Caco-2 (cell line): ENCODE measurements at regions of chr11 and their contacts with region 1.

Region 1: GRCh38 chr11:114439229-114440120 is at the start of gene REXO2:
- DNase-seq: peak; percentile 98
- H3K4me3 ChIP-seq: peak within 1 kb of the TSS; percentile 78
- H3K4me3 Mint-ChIP-seq: peak within 1 kb of the TSS; percentile 91
- H3K27ac Mint-ChIP-seq: peak within 1 kb of the TSS; percentile 96
- H3K4me1 ChIP-seq: peaks cover 42% of the 10 kb centered on the region
- H3K4me1 Mint-ChIP-seq: peaks cover 61% of the 10 kb centered on the region
- H3K27me3 ChIP-seq: no peaks in the 10 kb centered on the region
- H3K27me3 Mint-ChIP-seq: no peaks in the 10 kb centered on the region
- CTCF ChIP-seq: peak; percentile 16 to 53
- total RNA-seq, gene REXO2: 221 and 241 TPM in 2 replicates

Region 2: GRCh38 chr11:114075891-114076441 is 363.5 kb before region 1 on chr11:
- CTCF ChIA-PET with region 1: no interaction called
- POLR2A ChIA-PET with region 1: no interaction called
- intact Hi-C with region 1: no loop called
- DNase-seq: peak in 1 of 2 experiments; percentile 66
- H3K4me3 ChIP-seq: no peak overlapping the region
- H3K4me3 Mint-ChIP-seq: no peak overlapping the region
- H3K27ac Mint-ChIP-seq: no peak overlapping the region
- H3K4me1 ChIP-seq: peaks cover 50% of the 10 kb centered on the region
- H3K4me1 Mint-ChIP-seq: peaks cover 50% of the 10 kb centered on the region
- H3K27me3 ChIP-seq: no peaks in the 10 kb centered on the region
- H3K27me3 Mint-ChIP-seq: no peaks in the 10 kb centered on the region
- CTCF ChIP-seq: peak; percentile 75 to 91

Region 3: DNA sequence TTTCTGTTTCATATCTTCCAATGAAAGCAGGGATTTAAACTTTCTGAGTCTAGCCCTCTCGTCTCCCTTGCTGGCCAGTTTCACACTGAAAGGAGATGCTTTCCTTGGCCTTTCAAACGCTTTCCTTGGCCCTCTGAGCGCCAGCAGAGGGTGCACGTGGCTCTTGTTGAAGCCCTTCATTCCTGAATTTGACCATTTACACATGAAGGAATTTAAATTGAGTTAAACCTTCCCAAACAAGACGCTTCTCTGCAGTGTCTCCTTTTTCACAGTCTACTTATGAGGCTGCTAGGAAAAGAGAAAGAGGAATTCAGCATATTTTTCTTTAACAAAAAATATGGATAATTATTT is 121.7 kb before region 1 on chr11:
- CTCF ChIA-PET with region 1: no interaction called
- POLR2A ChIA-PET with region 1: no interaction called
- intact Hi-C with region 1: loop called (anchors 2 kb)
- DNase-seq: peak; percentile 52 to 57
- H3K4me3 ChIP-seq: no peak overlapping the region
- H3K4me3 Mint-ChIP-seq: no peak overlapping the region
- H3K27ac Mint-ChIP-seq: no peak overlapping the region
- H3K4me1 ChIP-seq: peaks cover 20% of the 10 kb centered on the region
- H3K4me1 Mint-ChIP-seq: peaks cover 14% of the 10 kb centered on the region
- H3K27me3 ChIP-seq: no peaks in the 10 kb centered on the region
- H3K27me3 Mint-ChIP-seq: peaks cover 3% of the 10 kb centered on the region
- CTCF ChIP-seq: peak; percentile 32 to 48

Region 4: GRCh38 chr11:114400217-114400914 is 39.1 kb before region 1 on chr11 and contains the starts of genes C11orf71 and RBM7:
- CTCF ChIA-PET with region 1: no interaction called
- POLR2A ChIA-PET with region 1: interaction called, 10 read pairs
- intact Hi-C with region 1: loop called (anchors 1 kb)
- DNase-seq: peak; percentile 100
- H3K4me3 ChIP-seq: peak within 1 kb of the TSS; percentile 51
- H3K4me3 Mint-ChIP-seq: peak within 1 kb of the TSS; percentile 91
- H3K27ac Mint-ChIP-seq: peak within 1 kb of the TSS; percentile 99
- H3K4me1 ChIP-seq: peaks cover 16% of the 10 kb centered on the region
- H3K4me1 Mint-ChIP-seq: peaks cover 36% of the 10 kb centered on the region
- H3K27me3 ChIP-seq: no peaks in the 10 kb centered on the region
- H3K27me3 Mint-ChIP-seq: no peaks in the 10 kb centered on the region
- CTCF ChIP-seq: peak in 1 of 2 experiments; percentile 33
- total RNA-seq, gene C11orf71: 9.5 and 9.8 TPM in 2 replicates
- total RNA-seq, gene RBM7: 57.6 and 62.6 TPM in 2 replicates

Region 5: DNA sequence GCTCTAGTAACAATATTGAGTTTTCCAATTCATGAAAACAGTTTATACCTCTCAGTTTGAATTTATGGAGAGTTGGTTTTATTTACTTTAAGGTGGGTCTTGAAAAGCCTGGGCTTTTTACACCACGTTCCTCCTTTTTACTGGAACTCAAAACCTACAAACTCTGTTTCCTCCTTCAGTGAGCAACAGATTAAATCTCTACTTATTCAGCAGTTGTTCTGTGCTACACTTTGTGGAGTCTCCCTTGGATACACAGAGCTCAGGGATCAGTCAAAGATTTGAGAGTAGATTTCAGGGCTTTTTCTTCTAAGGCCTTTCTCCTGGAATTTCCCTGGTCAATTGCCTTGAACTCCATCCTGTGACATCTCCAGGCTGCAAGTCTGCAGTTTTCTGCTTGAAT is 116.7 kb after region 1 on chr11:
- CTCF ChIA-PET with region 1: no interaction called
- POLR2A ChIA-PET with region 1: no interaction called
- intact Hi-C with region 1: loop called (anchors 5 kb)
- DNase-seq: peak in 1 of 2 experiments; percentile 51
- H3K4me3 ChIP-seq: no peak overlapping the region
- H3K4me3 Mint-ChIP-seq: no peak overlapping the region
- H3K27ac Mint-ChIP-seq: peak overlapping the region; percentile 10
- H3K4me1 ChIP-seq: peaks cover 36% of the 10 kb centered on the region
- H3K4me1 Mint-ChIP-seq: peaks cover 37% of the 10 kb centered on the region
- H3K27me3 ChIP-seq: no peaks in the 10 kb centered on the region
- H3K27me3 Mint-ChIP-seq: no peaks in the 10 kb centered on the region
- CTCF ChIP-seq: no peak